ENCODE measurements at regions of chr10 and their contacts with region 1.

Region 1: GRCh38 chr10:5629303-5630111 is 36.9 kb downstream of the ASB13 start:
- DNase-seq: peak; percentile 87
- H3K4me3 Mint-ChIP-seq: peak overlapping the region; percentile 25
- H3K27ac Mint-ChIP-seq: peak overlapping the region; percentile 78
- H3K4me1 Mint-ChIP-seq: peaks cover 35% of the 10 kb centered on the region
- H3K27me3 Mint-ChIP-seq: peaks cover 5% of the 10 kb centered on the region

Region 2: GRCh38 chr10:5518138-5518537 is 111.4 kb before region 1 on chr10:
- CTCF ChIA-PET with region 1: no interaction called
- POLR2A ChIA-PET with region 1: no interaction called
- DNase-seq: no peak
- H3K4me3 Mint-ChIP-seq: no peak overlapping the region
- H3K27ac Mint-ChIP-seq: no peak overlapping the region
- H3K4me1 Mint-ChIP-seq: no peaks in the 10 kb centered on the region
- H3K27me3 Mint-ChIP-seq: peaks cover 27% of the 10 kb centered on the region

Region 3: DNA sequence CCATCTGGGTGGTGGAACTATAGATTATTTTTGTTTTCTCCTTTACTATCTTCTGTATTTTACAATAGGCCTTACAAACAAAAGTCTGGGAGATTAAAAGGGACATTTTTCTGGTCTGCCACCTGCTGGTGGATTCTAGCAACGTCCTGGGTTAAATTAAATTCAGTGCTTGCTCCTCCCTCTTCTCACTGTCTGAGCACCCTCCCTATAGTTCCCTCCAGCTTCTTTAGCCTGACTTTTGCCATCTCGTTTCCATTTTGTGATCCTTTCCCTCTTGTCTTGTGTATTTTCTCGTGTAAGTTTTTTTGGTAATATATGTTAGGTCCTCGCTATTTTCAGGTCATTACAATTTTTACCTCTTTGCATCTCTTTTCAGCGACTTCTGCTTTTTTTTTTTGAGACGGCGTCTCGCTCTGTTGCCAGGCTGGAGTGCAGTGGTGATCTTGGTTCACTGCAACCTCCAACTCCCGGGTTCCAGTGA is 244.0 kb after region 1 on chr10:
- CTCF ChIA-PET with region 1: interaction called, 13 read pairs
- POLR2A ChIA-PET with region 1: no interaction called
- DNase-seq: peak; percentile 73
- H3K4me3 Mint-ChIP-seq: no peak overlapping the region
- H3K27ac Mint-ChIP-seq: no peak overlapping the region
- H3K4me1 Mint-ChIP-seq: peaks cover 2% of the 10 kb centered on the region
- H3K27me3 Mint-ChIP-seq: no peaks in the 10 kb centered on the region